B cell (primary cell): ENCODE measurements at regions of chr14 and their contacts with region 1.

Region 1: GRCh38 chr14:75126679-75127473 is at the start of gene NEK9:
- DNase-seq: peak; percentile 94
- ATAC-seq: peak; percentile 84
- H3K4me3 ChIP-seq: peak within 1 kb of the TSS; percentile 67 to 88 (median 73)
- H3K4me3 Mint-ChIP-seq: peak within 1 kb of the TSS; percentile 99
- H3K27ac ChIP-seq: peak within 1 kb of the TSS; percentile 82 to 94
- H3K27ac Mint-ChIP-seq: peak within 1 kb of the TSS; percentile 99
- H3K4me1 ChIP-seq: peaks cover 17 to 21% of the 10 kb centered on the region in 2 donors
- H3K4me1 Mint-ChIP-seq: peaks cover 36% of the 10 kb centered on the region
- H3K27me3 ChIP-seq: no peaks in the 10 kb centered on the region
- H3K27me3 Mint-ChIP-seq: no peaks in the 10 kb centered on the region
- CTCF ChIP-seq: no peak
- total RNA-seq, gene NEK9: 110 and 116 TPM in 2 replicates

Region 2: DNA sequence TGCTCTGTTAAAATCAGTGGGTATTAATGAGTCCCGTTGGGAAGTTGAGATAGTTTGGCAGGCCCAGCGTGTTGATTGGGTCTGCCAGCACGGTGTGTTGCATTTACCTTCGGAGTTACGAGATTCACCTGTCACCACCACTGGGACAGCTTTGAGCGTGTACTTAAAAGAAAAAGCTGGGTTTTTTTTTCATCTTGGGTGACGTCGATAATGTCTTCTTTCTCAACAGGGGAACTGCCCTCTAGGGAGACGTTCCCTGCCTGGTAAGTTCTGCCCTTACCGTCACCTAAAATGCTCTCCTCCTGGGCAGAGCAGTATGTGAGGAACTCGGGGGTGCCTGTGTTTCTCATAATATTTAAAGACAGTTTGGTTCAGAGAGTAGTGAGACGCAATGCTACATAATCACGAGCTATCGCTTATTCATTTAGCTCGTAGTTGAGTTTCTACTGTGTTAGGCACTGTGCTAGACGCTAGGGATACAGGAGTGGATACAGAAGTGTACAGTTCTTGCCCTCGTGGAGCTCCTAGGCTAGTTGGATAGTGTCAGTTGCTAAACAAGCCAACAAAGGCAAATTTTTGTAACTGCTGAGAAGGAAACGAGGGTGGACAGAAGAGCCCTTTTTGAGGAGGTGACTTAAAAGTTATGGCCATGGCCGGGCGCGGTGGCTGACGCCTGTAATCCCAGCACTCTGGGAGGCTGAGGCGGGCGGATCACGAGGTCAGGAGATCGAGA is 244.3 kb before region 1 on chr14:
- CTCF ChIA-PET with region 1: no interaction called
- POLR2A ChIA-PET with region 1: no interaction called
- intact Hi-C with region 1: no loop called
- DNase-seq: peak; percentile 77
- ATAC-seq: peak; percentile 34
- H3K4me3 ChIP-seq: peak overlapping the region; percentile 76 to 94 (median 79)
- H3K4me3 Mint-ChIP-seq: peak overlapping the region; percentile 100
- H3K27ac ChIP-seq: peak overlapping the region; percentile 80 to 89
- H3K27ac Mint-ChIP-seq: peak overlapping the region; percentile 99
- H3K4me1 ChIP-seq: peaks cover 29 to 32% of the 10 kb centered on the region in 2 donors
- H3K4me1 Mint-ChIP-seq: peaks cover 57% of the 10 kb centered on the region
- H3K27me3 ChIP-seq: no peaks in the 10 kb centered on the region
- H3K27me3 Mint-ChIP-seq: no peaks in the 10 kb centered on the region
- CTCF ChIP-seq: no peak

Region 3: DNA sequence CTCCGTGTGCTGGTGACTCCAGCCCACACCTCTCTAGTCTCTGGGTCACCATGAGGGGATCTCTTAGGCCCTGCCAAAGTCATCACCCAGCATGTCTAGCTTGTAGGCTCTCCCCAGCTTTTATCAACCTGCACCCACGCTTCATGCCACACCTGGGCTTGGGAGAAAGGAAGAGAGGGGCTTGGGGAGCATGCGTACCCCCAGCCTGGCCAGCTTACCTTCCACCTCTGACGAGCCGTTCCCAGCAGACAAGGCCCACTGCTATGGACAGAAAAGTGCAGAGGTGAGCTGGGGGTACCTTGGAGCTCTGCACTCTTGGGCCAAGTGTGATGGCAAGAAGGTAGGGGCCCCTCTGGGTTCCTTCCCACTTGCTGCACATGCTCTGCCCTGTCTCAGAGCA is 173.2 kb before region 1 on chr14:
- CTCF ChIA-PET with region 1: no interaction called
- POLR2A ChIA-PET with region 1: no interaction called
- intact Hi-C with region 1: no loop called
- DNase-seq: no peak
- ATAC-seq: no peak
- H3K4me3 ChIP-seq: no peak overlapping the region
- H3K4me3 Mint-ChIP-seq: no peak overlapping the region
- H3K27ac ChIP-seq: no peak overlapping the region
- H3K27ac Mint-ChIP-seq: no peak overlapping the region
- H3K4me1 ChIP-seq: peaks cover 5 to 12% of the 10 kb centered on the region in 2 donors
- H3K4me1 Mint-ChIP-seq: peaks cover 1% of the 10 kb centered on the region
- H3K27me3 ChIP-seq: peaks cover 0 to 39% (median 8%) of the 10 kb centered on the region in 4 experiments
- H3K27me3 Mint-ChIP-seq: peaks cover 10% of the 10 kb centered on the region
- CTCF ChIP-seq: no peak

Region 4: GRCh38 chr14:75050852-75051554 is 75.9 kb before region 1 on chr14 and contains the start of gene MLH3:
- CTCF ChIA-PET with region 1: no interaction called
- POLR2A ChIA-PET with region 1: no interaction called
- intact Hi-C with region 1: no loop called
- DNase-seq: peak; percentile 90
- ATAC-seq: peak; percentile 83
- H3K4me3 ChIP-seq: peak within 1 kb of the TSS; percentile 44 to 82 (median 64)
- H3K4me3 Mint-ChIP-seq: peak within 1 kb of the TSS; percentile 97
- H3K27ac ChIP-seq: peak within 1 kb of the TSS in 1 of 2 donors; percentile 83
- H3K27ac Mint-ChIP-seq: peak within 1 kb of the TSS; percentile 96
- H3K4me1 ChIP-seq: peaks cover 9 to 10% of the 10 kb centered on the region in 2 donors
- H3K4me1 Mint-ChIP-seq: peaks cover 19% of the 10 kb centered on the region
- H3K27me3 ChIP-seq: no peaks in the 10 kb centered on the region
- H3K27me3 Mint-ChIP-seq: no peaks in the 10 kb centered on the region
- CTCF ChIP-seq: no peak
- total RNA-seq, gene MLH3: 19.9 and 28.2 TPM in 2 replicates

Region 5: DNA sequence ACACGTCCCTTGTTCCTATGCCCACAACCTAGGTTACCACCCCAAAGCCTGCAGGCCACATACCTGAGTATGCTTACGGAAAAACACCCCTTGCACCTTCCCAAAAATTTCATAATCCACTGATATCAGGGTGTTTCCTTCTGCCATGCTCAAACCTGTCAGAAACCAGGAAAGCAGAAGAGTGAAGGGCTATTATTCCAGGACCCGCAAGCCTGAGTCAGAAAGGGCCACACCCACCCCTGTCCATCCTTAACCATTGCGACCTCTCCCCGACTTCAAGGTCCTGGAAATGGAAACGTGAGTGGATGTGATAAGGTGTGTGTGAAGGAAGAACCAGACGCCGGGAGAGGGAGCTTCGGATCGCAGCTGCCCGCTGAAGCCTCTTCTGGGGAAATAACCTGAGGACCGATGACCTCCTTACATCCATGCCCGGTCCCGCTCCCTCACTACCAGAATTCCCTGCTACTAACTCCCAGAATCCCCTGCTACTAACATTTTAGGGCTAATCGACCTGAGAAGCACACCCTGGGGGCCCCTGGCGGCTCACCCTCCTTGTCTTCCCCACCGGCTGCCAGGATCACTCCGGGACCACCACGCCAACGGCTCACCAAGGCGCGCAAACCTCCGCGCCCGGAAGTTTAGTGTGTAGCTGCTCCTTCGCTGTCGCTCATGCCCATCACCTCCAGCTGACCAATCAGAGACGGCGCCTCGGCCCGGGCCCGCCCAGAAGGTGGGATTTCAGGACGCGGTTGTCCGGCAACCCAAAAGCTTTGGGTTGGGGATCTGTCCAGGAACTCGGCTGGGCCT is 63.3 kb before region 1 on chr14 and contains the start of gene ACYP1:
- CTCF ChIA-PET with region 1: no interaction called
- POLR2A ChIA-PET with region 1: interaction called, 3 read pairs
- intact Hi-C with region 1: loop called (anchors 10 kb)
- DNase-seq: peak; percentile 91
- ATAC-seq: peak; percentile 99
- H3K4me3 ChIP-seq: peak within 1 kb of the TSS; percentile 72 to 100 (median 96)
- H3K4me3 Mint-ChIP-seq: peak within 1 kb of the TSS; percentile 100
- H3K27ac ChIP-seq: peak within 1 kb of the TSS; percentile 65 to 73
- H3K27ac Mint-ChIP-seq: peak within 1 kb of the TSS; percentile 95
- H3K4me1 ChIP-seq: peaks cover 12 to 16% of the 10 kb centered on the region in 2 donors
- H3K4me1 Mint-ChIP-seq: peaks cover 20% of the 10 kb centered on the region
- H3K27me3 ChIP-seq: no peaks in the 10 kb centered on the region
- H3K27me3 Mint-ChIP-seq: no peaks in the 10 kb centered on the region
- CTCF ChIP-seq: no peak
- total RNA-seq, gene ACYP1: 34.1 and 46.7 TPM in 2 replicates

Region 6: DNA sequence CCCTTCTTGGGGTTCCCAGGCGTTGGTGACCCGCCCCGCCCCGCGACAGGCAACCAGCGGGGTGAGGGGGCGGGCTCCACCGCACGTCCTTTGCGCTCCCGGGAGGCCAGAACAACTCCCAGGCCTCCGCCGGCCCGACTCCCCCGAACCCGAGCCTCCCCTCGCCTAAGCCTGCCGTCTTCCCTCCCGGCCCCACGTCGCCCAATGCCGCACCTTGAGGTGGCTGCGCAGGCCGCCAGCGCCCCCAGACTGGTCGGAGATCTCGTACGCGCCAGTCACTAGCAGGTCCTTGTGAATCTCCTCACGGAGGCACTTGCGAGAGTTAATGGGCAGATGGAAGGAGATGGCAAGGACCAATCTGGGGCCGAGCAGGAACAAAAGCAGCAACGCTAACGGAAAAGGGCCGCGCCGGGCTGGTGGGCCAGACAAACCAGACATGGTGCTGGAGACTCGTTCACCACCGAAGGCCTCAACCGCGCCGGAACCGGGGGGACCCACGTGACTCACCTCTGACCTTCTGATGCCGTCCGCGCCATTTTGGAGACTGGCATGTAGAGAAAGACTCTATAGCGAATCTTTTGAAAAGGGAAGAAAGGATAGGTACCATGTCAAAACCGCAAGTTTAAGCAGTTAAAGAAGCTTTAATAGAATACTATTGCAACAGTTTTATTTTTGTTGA is 49.4 kb after region 1 on chr14 and contains the start of gene TMED10:
- CTCF ChIA-PET with region 1: no interaction called
- POLR2A ChIA-PET with region 1: interaction called, 3 read pairs
- intact Hi-C with region 1: loop called (anchors 1 kb)
- DNase-seq: peak; percentile 97
- ATAC-seq: peak; percentile 74
- H3K4me3 ChIP-seq: peak within 1 kb of the TSS; percentile 82 to 99 (median 91)
- H3K4me3 Mint-ChIP-seq: peak within 1 kb of the TSS; percentile 92
- H3K27ac ChIP-seq: peak within 1 kb of the TSS; percentile 97 to 99
- H3K27ac Mint-ChIP-seq: peak within 1 kb of the TSS; percentile 97
- H3K4me1 ChIP-seq: peaks cover 17 to 22% of the 10 kb centered on the region in 2 donors
- H3K4me1 Mint-ChIP-seq: peaks cover 32% of the 10 kb centered on the region
- H3K27me3 ChIP-seq: no peaks in the 10 kb centered on the region
- H3K27me3 Mint-ChIP-seq: no peaks in the 10 kb centered on the region
- CTCF ChIP-seq: no peak
- total RNA-seq, gene TMED10: 111 and 119 TPM in 2 replicates

Region 7: GRCh38 chr14:75427482-75428229 is 300.8 kb after region 1 on chr14 and contains the start of gene JDP2:
- CTCF ChIA-PET with region 1: no interaction called
- POLR2A ChIA-PET with region 1: no interaction called
- intact Hi-C with region 1: loop called (anchors 2 kb)
- DNase-seq: peak; percentile 77
- ATAC-seq: peak; percentile 53
- H3K4me3 ChIP-seq: peak within 1 kb of the TSS; percentile 45 to 86 (median 72)
- H3K4me3 Mint-ChIP-seq: peak within 1 kb of the TSS; percentile 94
- H3K27ac ChIP-seq: peak within 1 kb of the TSS; percentile 86
- H3K27ac Mint-ChIP-seq: peak within 1 kb of the TSS; percentile 99
- H3K4me1 ChIP-seq: peaks cover 23 to 30% of the 10 kb centered on the region in 2 donors
- H3K4me1 Mint-ChIP-seq: peaks cover 38% of the 10 kb centered on the region
- H3K27me3 ChIP-seq: no peaks in the 10 kb centered on the region
- H3K27me3 Mint-ChIP-seq: no peaks in the 10 kb centered on the region
- CTCF ChIP-seq: no peak
- total RNA-seq, gene JDP2: 17.0 and 17.9 TPM in 2 replicates

Region 8: GRCh38 chr14:75438496-75439080 is 311.7 kb after region 1 on chr14:
- CTCF ChIA-PET with region 1: no interaction called
- POLR2A ChIA-PET with region 1: no interaction called
- intact Hi-C with region 1: no loop called
- DNase-seq: no peak
- ATAC-seq: no peak
- H3K4me3 ChIP-seq: no peak overlapping the region
- H3K4me3 Mint-ChIP-seq: no peak overlapping the region
- H3K27ac ChIP-seq: no peak overlapping the region
- H3K27ac Mint-ChIP-seq: no peak overlapping the region
- H3K4me1 ChIP-seq: peaks cover 0 to 41% of the 10 kb centered on the region in 2 donors
- H3K4me1 Mint-ChIP-seq: peaks cover 54% of the 10 kb centered on the region
- H3K27me3 ChIP-seq: no peaks in the 10 kb centered on the region
- H3K27me3 Mint-ChIP-seq: no peaks in the 10 kb centered on the region
- CTCF ChIP-seq: no peak